CD8-positive, alpha-beta memory T cell (primary cell): ENCODE measurements at regions of chr17 and their contacts with region 1.

Region 1: DNA sequence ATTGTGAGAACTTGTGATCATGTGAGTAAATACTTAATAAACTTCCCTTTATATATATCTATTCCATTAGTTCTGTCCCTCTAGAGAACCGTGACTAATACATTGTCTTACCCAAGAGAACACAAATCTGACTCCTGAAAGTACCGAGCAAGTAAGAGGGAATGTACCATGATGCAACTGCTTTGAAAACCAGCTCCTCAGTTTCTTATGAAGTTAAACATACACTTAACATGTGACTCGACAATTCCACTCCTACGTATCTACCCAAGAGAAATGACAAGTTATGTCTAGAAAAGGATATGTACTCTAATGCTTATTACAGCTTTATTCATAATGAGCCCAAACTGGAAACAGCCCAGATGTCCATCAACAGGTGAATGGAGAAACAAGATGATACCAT is 8.8 kb upstream of the GJD3 start:
- DNase-seq: no peak
- H3K4me3 ChIP-seq: no peak overlapping the region
- H3K4me3 Mint-ChIP-seq: no peak overlapping the region
- H3K27ac ChIP-seq: no peak overlapping the region
- H3K27ac Mint-ChIP-seq: no peak overlapping the region
- H3K4me1 ChIP-seq: no peaks in the 10 kb centered on the region
- H3K4me1 Mint-ChIP-seq: peaks cover 3 to 10% (median 8%) of the 10 kb centered on the region in 3 donors
- H3K27me3 ChIP-seq: no peaks in the 10 kb centered on the region
- H3K27me3 Mint-ChIP-seq: peaks cover 4 to 6% of the 10 kb centered on the region in 2 donors

Region 2: GRCh38 chr17:40433551-40434415 is 60.5 kb after region 1 on chr17:
- CTCF ChIA-PET with region 1: no interaction called
- POLR2A ChIA-PET with region 1: no interaction called
- DNase-seq: no peak
- H3K4me3 ChIP-seq: no peak overlapping the region
- H3K4me3 Mint-ChIP-seq: no peak overlapping the region
- H3K27ac ChIP-seq: no peak overlapping the region
- H3K27ac Mint-ChIP-seq: peak overlapping the region in 1 of 8 donors; percentile 42
- H3K4me1 ChIP-seq: no peaks in the 10 kb centered on the region
- H3K4me1 Mint-ChIP-seq: peaks cover 0 to 6% (median 2%) of the 10 kb centered on the region in 3 donors
- H3K27me3 ChIP-seq: no peaks in the 10 kb centered on the region
- H3K27me3 Mint-ChIP-seq: peaks cover 0 to 6% of the 10 kb centered on the region in 2 donors

Region 3: GRCh38 chr17:40463122-40463550 is 89.8 kb after region 1 on chr17:
- CTCF ChIA-PET with region 1: no interaction called
- POLR2A ChIA-PET with region 1: interaction called, 15 read pairs
- DNase-seq: no peak
- H3K4me3 ChIP-seq: no peak overlapping the region
- H3K4me3 Mint-ChIP-seq: no peak overlapping the region
- H3K27ac ChIP-seq: no peak overlapping the region
- H3K27ac Mint-ChIP-seq: no peak overlapping the region
- H3K4me1 ChIP-seq: no peaks in the 10 kb centered on the region
- H3K4me1 Mint-ChIP-seq: peaks cover 0 to 2% (median 0%) of the 10 kb centered on the region in 3 donors
- H3K27me3 ChIP-seq: no peaks in the 10 kb centered on the region
- H3K27me3 Mint-ChIP-seq: peaks cover 0 to 3% of the 10 kb centered on the region in 2 donors